ENCODE measurements at regions of chr17 and their contacts with region 1.

Region 1: GRCh38 chr17:7460850-7461660 is 16.2 kb downstream of the CHRNB1 start:
- DNase-seq: no peak
- ATAC-seq: no peak
- H3K4me3 ChIP-seq: no peak overlapping the region
- H3K4me3 Mint-ChIP-seq: no peak overlapping the region
- H3K27ac ChIP-seq: no peak overlapping the region
- H3K27ac Mint-ChIP-seq: peak overlapping the region in 1 of 2 donors; percentile 24
- H3K4me1 ChIP-seq: peaks cover 8% of the 10 kb centered on the region
- H3K4me1 Mint-ChIP-seq: peaks cover 4 to 14% of the 10 kb centered on the region in 2 donors
- H3K27me3 ChIP-seq: no peaks in the 10 kb centered on the region
- H3K27me3 Mint-ChIP-seq: no peaks in the 10 kb centered on the region
- CTCF ChIP-seq: no peak

Region 2: GRCh38 chr17:7484067-7484918 is 23.2 kb after region 1 on chr17 and contains the start of gene POLR2A:
- intact Hi-C with region 1: loop called (anchors 1 kb)
- DNase-seq: peak; percentile 99
- ATAC-seq: peak; percentile 63 to 83 (median 66)
- H3K4me3 ChIP-seq: peak within 1 kb of the TSS; percentile 81
- H3K4me3 Mint-ChIP-seq: peak within 1 kb of the TSS; percentile 100
- H3K27ac ChIP-seq: peak within 1 kb of the TSS; percentile 96
- H3K27ac Mint-ChIP-seq: peak within 1 kb of the TSS; percentile 100
- H3K4me1 ChIP-seq: peaks cover 50% of the 10 kb centered on the region
- H3K4me1 Mint-ChIP-seq: peaks cover 72 to 84% of the 10 kb centered on the region in 2 donors
- H3K27me3 ChIP-seq: no peaks in the 10 kb centered on the region
- H3K27me3 Mint-ChIP-seq: no peaks in the 10 kb centered on the region
- CTCF ChIP-seq: no peak
- total RNA-seq, gene POLR2A: 515 to 879 (median 524) TPM

Region 3: GRCh38 chr17:7561028-7561575 is 100.0 kb after region 1 on chr17:
- intact Hi-C with region 1: no loop called
- DNase-seq: peak; percentile 80 to 89
- ATAC-seq: peak; percentile 69 to 86 (median 75)
- H3K4me3 ChIP-seq: peak overlapping the region; percentile 67
- H3K4me3 Mint-ChIP-seq: peak overlapping the region; percentile 98
- H3K27ac ChIP-seq: peak overlapping the region; percentile 93
- H3K27ac Mint-ChIP-seq: peak overlapping the region; percentile 97 to 99
- H3K4me1 ChIP-seq: peaks cover 53% of the 10 kb centered on the region
- H3K4me1 Mint-ChIP-seq: peaks cover 22 to 35% of the 10 kb centered on the region in 2 donors
- H3K27me3 ChIP-seq: no peaks in the 10 kb centered on the region
- H3K27me3 Mint-ChIP-seq: no peaks in the 10 kb centered on the region
- CTCF ChIP-seq: peak; percentile 75